ENCODE measurements at regions of chr5 and their contacts with region 1.

Region 1: GRCh38 chr5:123598028-123598689 is 86.2 kb downstream of the CSNK1G3 start:
- DNase-seq: no peak
- ATAC-seq: no peak
- H3K4me3 ChIP-seq: no peak overlapping the region
- H3K27ac ChIP-seq: no peak overlapping the region
- H3K4me1 ChIP-seq: no peaks in the 10 kb centered on the region
- H3K27me3 ChIP-seq: no peaks in the 10 kb centered on the region

Region 2: GRCh38 chr5:123511648-123512605 is 86.2 kb before region 1 on chr5 and contains the start of gene CSNK1G3:
- intact Hi-C with region 1: loop called in 1 of 4 experiments (anchors 10 kb)
- DNase-seq: peak; percentile 98
- ATAC-seq: peak; percentile 99
- H3K4me3 ChIP-seq: peak within 1 kb of the TSS; percentile 100
- H3K27ac ChIP-seq: peak within 1 kb of the TSS; percentile 95
- H3K4me1 ChIP-seq: peaks cover 4% of the 10 kb centered on the region
- H3K27me3 ChIP-seq: no peaks in the 10 kb centered on the region
- total RNA-seq, gene CSNK1G3: 30.9 to 37.3 (median 33.9) TPM

Region 3: DNA sequence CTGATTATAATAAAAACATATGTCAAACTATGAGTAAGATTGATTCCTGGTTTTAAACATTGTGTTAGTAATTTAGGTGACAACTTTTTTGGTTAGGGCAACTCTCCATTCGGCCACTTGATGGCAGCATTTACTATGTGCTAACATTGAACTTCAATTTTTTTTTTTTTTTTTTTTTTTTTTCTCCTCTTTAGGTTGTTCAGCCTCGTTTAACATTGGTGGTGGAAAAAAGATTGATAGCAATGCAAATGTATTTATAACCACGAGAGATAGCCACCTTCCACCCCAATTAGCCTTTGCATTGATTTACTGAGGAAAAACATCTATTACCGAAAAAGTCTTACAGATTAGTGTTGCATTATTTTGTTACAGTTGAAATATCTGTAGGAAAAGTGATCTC is 72.9 kb after region 1 on chr5:
- intact Hi-C with region 1: no loop called
- DNase-seq: peak in 2 of 3 donors; percentile 20 to 59
- ATAC-seq: no peak
- H3K4me3 ChIP-seq: no peak overlapping the region
- H3K27ac ChIP-seq: no peak overlapping the region
- H3K4me1 ChIP-seq: peaks cover 3% of the 10 kb centered on the region
- H3K27me3 ChIP-seq: no peaks in the 10 kb centered on the region

Region 4: DNA sequence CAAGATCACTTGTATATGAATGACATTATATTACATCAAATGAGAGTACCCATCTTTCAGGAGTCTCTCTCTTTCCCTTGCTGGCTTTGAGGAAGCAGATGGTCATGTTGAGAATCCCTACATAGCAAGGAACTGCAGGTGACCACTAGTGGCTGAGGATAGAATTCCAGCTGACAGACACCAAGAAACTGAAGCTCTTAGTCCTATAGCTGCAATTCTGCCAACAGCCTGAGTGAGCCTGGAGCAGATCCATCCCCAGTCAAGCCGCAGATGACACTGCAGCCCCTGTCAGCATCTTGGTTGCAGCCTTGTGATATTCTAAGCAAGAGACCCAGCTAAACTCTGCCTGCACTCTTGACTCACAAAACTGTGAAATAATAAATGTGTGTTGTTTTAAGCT is 445.3 kb after region 1 on chr5:
- intact Hi-C with region 1: no loop called
- DNase-seq: no peak
- ATAC-seq: no peak
- H3K4me3 ChIP-seq: no peak overlapping the region
- H3K27ac ChIP-seq: no peak overlapping the region
- H3K4me1 ChIP-seq: no peaks in the 10 kb centered on the region
- H3K27me3 ChIP-seq: no peaks in the 10 kb centered on the region